ENCODE measurements at regions of chr15 and their contacts with region 1.

Region 1: GRCh38 chr15:78872972-78873792 is 492 bp downstream of the MORF4L1 start:
- DNase-seq: peak; percentile 77 to 95 (median 90)
- ATAC-seq: peak; percentile 74 to 77
- H3K4me3 Mint-ChIP-seq: peak overlapping the region; percentile 93 to 100 (median 100)
- H3K27ac Mint-ChIP-seq: peak overlapping the region; percentile 99 to 100 (median 100)
- H3K4me1 Mint-ChIP-seq: peaks cover 28 to 43% (median 41%) of the 10 kb centered on the region in 4 donors
- H3K27me3 Mint-ChIP-seq: no peaks in the 10 kb centered on the region

Region 2: GRCh38 chr15:78830514-78831228 is 42.5 kb before region 1 on chr15:
- POLR2A ChIA-PET with region 1: interaction called, 16 read pairs
- DNase-seq: peak in 2 of 10 donors; percentile 6 to 33
- ATAC-seq: peak; percentile 67 to 79
- H3K4me3 Mint-ChIP-seq: peak overlapping the region; percentile 75 to 91 (median 82)
- H3K27ac Mint-ChIP-seq: peak overlapping the region in 7 of 10 donors; percentile 9 to 83 (median 71)
- H3K4me1 Mint-ChIP-seq: peaks cover 2 to 20% (median 13%) of the 10 kb centered on the region in 4 donors
- H3K27me3 Mint-ChIP-seq: peaks cover 0 to 19% (median 4%) of the 10 kb centered on the region in 5 donors

Region 3: GRCh38 chr15:78859971-78860732 is 13.0 kb before region 1 on chr15:
- POLR2A ChIA-PET with region 1: interaction called, 23 read pairs
- DNase-seq: peak; percentile 21 to 78 (median 60)
- ATAC-seq: peak; percentile 80 to 82
- H3K4me3 Mint-ChIP-seq: peak overlapping the region; percentile 78 to 91 (median 86)
- H3K27ac Mint-ChIP-seq: peak overlapping the region; percentile 48 to 95 (median 84)
- H3K4me1 Mint-ChIP-seq: peaks cover 4 to 8% (median 6%) of the 10 kb centered on the region in 4 donors
- H3K27me3 Mint-ChIP-seq: no peaks in the 10 kb centered on the region

Measured in naive thymus-derived CD8-positive, alpha-beta T cell (primary cell).